ENCODE measurements at regions of chr6 and their contacts with region 1.

Region 1: GRCh38 chr6:138109042-138109997 is 2.1 kb upstream of the PERP start:
- DNase-seq: peak; percentile 89
- H3K4me3 ChIP-seq: no peak overlapping the region
- H3K27ac ChIP-seq: no peak overlapping the region
- H3K4me1 ChIP-seq: no peaks in the 10 kb centered on the region
- H3K27me3 ChIP-seq: no peaks in the 10 kb centered on the region
- CTCF ChIP-seq: peak; percentile 87 to 98 (median 92)
- POLR2A ChIP-seq: no peak

Region 2: GRCh38 chr6:138001750-138002349 is 107.5 kb before region 1 on chr6:
- intact Hi-C with region 1: loop called (anchors 10 kb)
- DNase-seq: peak; percentile 81
- H3K4me3 ChIP-seq: no peak overlapping the region
- H3K27ac ChIP-seq: no peak overlapping the region
- H3K4me1 ChIP-seq: no peaks in the 10 kb centered on the region
- H3K27me3 ChIP-seq: no peaks in the 10 kb centered on the region
- CTCF ChIP-seq: peak; percentile 67 to 81 (median 74)
- POLR2A ChIP-seq: no peak

Measured in testis (tissue), 5 donors.